MCF 10A (cell line): ENCODE measurements at regions of chr11 and their contacts with region 1.

Region 1: DNA sequence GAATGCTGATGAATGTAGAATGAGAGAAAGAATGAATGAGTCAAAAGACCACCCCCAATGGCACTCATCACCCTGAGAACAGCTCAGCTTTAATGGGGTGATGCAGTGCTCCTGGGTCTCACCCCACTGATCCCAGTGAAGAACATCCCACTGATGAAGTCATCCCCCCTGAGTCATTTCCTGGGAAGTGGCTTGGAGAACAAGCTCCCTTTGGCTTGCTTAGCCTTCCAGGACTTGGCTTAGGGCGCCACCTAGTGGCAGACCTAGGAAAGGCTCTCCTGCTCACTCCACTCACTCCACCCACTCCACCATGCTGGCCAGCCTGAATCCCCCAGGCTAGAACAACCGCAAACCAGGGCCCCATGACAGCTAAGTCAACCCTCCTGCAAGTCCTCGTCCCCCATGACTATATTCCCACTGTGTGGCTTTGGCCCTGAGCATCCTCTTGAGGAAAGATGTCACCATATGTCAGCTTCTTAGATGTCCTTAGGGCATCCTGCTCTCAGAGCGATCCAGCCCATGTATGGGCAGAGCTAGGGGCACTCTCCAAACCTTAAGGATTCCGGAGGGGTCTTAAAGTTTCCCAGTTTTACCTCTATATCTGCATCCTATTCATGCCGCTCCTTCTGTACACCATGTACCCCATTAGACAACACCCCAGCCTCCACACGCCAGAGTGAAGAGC is 17.8 kb upstream of the TMPRSS13 start:
- DNase-seq: peak; percentile 94
- H3K4me3 Mint-ChIP-seq: no peak overlapping the region
- H3K27ac Mint-ChIP-seq: no peak overlapping the region
- H3K4me1 Mint-ChIP-seq: peaks cover 3% of the 10 kb centered on the region
- H3K27me3 Mint-ChIP-seq: peaks cover 29% of the 10 kb centered on the region
- CTCF ChIP-seq: peak; percentile 91

Region 2: GRCh38 chr11:117426269-117426685 is 520.7 kb before region 1 on chr11:
- CTCF ChIA-PET with region 1: interaction called, 21 read pairs
- POLR2A ChIA-PET with region 1: no interaction called
- intact Hi-C with region 1: loop called (anchors 2 kb)
- DNase-seq: peak; percentile 63
- H3K4me3 Mint-ChIP-seq: no peak overlapping the region
- H3K27ac Mint-ChIP-seq: no peak overlapping the region
- H3K4me1 Mint-ChIP-seq: no peaks in the 10 kb centered on the region
- H3K27me3 Mint-ChIP-seq: peaks cover 32% of the 10 kb centered on the region
- CTCF ChIP-seq: peak; percentile 98

Region 3: GRCh38 chr11:117817368-117818040 is 129.5 kb before region 1 on chr11:
- CTCF ChIA-PET with region 1: interaction called, 26 read pairs
- POLR2A ChIA-PET with region 1: no interaction called
- intact Hi-C with region 1: loop called (anchors 1 kb)
- DNase-seq: peak; percentile 70
- H3K4me3 Mint-ChIP-seq: no peak overlapping the region
- H3K27ac Mint-ChIP-seq: peak overlapping the region; percentile 29
- H3K4me1 Mint-ChIP-seq: peaks cover 11% of the 10 kb centered on the region
- H3K27me3 Mint-ChIP-seq: no peaks in the 10 kb centered on the region
- CTCF ChIP-seq: peak; percentile 94

Region 4: DNA sequence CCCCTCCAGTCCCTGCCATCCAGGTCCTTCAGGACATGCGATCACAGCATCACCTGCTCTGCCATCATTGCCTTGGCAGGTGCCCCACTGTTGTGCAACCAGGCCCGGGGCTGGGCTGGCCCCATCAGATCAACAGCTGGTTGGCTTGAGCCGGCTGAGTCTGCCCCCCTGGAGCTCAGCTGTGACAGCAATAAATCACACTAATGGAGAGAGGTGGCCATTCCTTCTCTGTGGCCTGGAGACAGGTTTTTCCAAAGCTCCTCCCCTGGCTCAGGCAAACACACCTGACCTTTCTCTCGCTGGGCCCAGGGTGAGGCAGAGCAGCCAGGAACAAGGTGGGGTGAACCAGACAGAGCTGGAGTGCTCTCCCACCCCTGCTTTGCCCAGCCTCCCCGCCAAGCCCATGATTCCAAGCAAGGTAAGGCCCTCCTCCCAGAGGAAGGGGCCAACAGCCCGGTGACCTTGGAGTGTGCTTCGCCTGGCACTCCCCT is 113.5 kb before region 1 on chr11:
- CTCF ChIA-PET with region 1: interaction called, 19 read pairs
- POLR2A ChIA-PET with region 1: no interaction called
- intact Hi-C with region 1: no loop called
- DNase-seq: peak; percentile 75
- H3K4me3 Mint-ChIP-seq: no peak overlapping the region
- H3K27ac Mint-ChIP-seq: no peak overlapping the region
- H3K4me1 Mint-ChIP-seq: peaks cover 5% of the 10 kb centered on the region
- H3K27me3 Mint-ChIP-seq: peaks cover 46% of the 10 kb centered on the region
- CTCF ChIP-seq: no peak

Region 5: DNA sequence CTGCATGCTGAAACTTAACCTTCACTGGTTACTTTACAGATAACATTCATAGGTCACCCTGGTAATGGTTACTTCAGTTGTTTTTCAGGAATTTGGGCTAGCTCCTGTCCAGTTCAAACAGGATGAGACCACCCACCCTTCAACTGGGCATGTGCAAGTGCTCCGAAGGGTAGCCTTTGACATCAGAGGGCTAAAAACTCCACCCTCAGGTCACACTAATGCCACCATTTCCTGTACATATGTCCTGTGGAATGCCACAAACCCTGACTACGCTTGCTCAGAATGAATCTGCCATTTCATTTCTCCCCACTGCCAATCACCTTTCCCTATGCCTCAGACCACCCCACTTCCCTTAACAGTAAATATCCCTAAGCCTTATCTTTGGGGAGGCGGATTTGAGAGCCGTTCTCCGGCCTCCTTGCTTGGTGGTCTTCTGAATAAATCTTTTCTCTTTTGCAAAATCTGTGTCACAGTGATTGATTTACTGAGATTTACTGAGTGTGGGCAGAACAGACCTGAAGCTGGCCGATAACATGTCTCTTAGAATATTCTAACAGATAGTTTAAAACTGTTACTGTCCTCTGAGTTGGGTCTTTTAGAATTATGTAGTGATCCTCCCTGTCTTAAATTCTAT is 97.1 kb before region 1 on chr11:
- CTCF ChIA-PET with region 1: interaction called, 200 read pairs
- POLR2A ChIA-PET with region 1: interaction called, 8 read pairs
- intact Hi-C with region 1: no loop called
- DNase-seq: no peak
- H3K4me3 Mint-ChIP-seq: no peak overlapping the region
- H3K27ac Mint-ChIP-seq: no peak overlapping the region
- H3K4me1 Mint-ChIP-seq: no peaks in the 10 kb centered on the region
- H3K27me3 Mint-ChIP-seq: peaks cover 28% of the 10 kb centered on the region
- CTCF ChIP-seq: no peak

Region 6: GRCh38 chr11:117970400-117971024 is 23.5 kb after region 1 on chr11:
- CTCF ChIA-PET with region 1: interaction called, 13 read pairs
- POLR2A ChIA-PET with region 1: no interaction called
- intact Hi-C with region 1: no loop called
- DNase-seq: no peak
- H3K4me3 Mint-ChIP-seq: no peak overlapping the region
- H3K27ac Mint-ChIP-seq: no peak overlapping the region
- H3K4me1 Mint-ChIP-seq: peaks cover 4% of the 10 kb centered on the region
- H3K27me3 Mint-ChIP-seq: peaks cover 13% of the 10 kb centered on the region
- CTCF ChIP-seq: no peak

Region 7: DNA sequence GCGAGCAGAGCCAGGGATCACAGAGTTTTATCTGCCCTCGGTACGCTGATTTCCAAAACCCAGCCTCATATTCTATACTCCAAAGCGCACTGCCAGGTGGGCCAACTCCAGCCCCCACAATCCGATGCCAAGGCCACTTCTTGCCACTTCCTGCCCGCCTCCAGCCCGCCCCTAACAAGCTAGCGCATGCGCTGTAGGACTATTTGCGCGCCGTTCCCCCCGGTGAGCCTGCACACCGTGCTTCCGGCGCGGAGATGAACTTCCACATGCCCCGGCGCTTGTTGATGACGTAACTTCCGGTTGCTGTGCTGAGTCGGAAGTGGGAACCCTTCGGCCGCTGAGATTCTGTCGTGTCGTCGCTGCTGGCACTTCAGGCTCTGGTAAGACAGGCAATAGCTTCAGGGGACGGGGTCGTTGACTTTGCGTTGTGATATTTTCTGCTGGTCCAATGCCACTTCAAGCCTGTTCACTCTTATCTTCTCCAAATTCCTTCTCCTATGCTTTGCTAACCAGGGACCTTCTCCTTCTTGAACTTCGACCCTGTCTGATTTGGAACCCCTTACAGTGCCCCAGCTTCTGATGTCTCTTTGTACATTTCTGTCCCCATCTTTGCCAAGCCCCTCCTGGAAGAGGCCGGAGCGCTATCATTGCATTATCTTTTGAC is 412.4 kb after region 1 on chr11 and contains the start of gene UBE4A:
- CTCF ChIA-PET with region 1: no interaction called
- POLR2A ChIA-PET with region 1: no interaction called
- intact Hi-C with region 1: no loop called
- DNase-seq: peak; percentile 91
- H3K4me3 Mint-ChIP-seq: peak within 1 kb of the TSS; percentile 90
- H3K27ac Mint-ChIP-seq: peak within 1 kb of the TSS; percentile 89
- H3K4me1 Mint-ChIP-seq: no peaks in the 10 kb centered on the region
- H3K27me3 Mint-ChIP-seq: peaks cover 12% of the 10 kb centered on the region
- CTCF ChIP-seq: no peak
- total RNA-seq, gene UBE4A: 41.0 and 47.7 TPM in 2 replicates